Endothelial cell of umbilical vein (primary cell): ENCODE measurements at regions of chr3 and their contacts with region 1.

Region 1: GRCh38 chr3:57852896-57853295 is 96.8 kb downstream of the SLMAP start:
- DNase-seq: peak; percentile 54
- H3K4me3 ChIP-seq: no peak overlapping the region
- H3K27ac ChIP-seq: no peak overlapping the region
- H3K4me1 ChIP-seq: no peaks in the 10 kb centered on the region
- H3K27me3 ChIP-seq: no peaks in the 10 kb centered on the region
- CTCF ChIP-seq: peak in 1 of 2 donors; percentile 6
- POLR2A ChIP-seq: no peak

Region 2: GRCh38 chr3:57627976-57628375 is 224.9 kb before region 1 on chr3:
- CTCF ChIA-PET with region 1: interaction called, 10 read pairs
- POLR2A ChIA-PET with region 1: no interaction called
- dilution Hi-C with region 1: no loop called
- intact Hi-C with region 1: no loop called
- DNase-seq: no peak
- H3K4me3 ChIP-seq: no peak overlapping the region
- H3K27ac ChIP-seq: no peak overlapping the region
- H3K4me1 ChIP-seq: peaks cover 13% of the 10 kb centered on the region
- H3K27me3 ChIP-seq: no peaks in the 10 kb centered on the region
- CTCF ChIP-seq: no peak
- POLR2A ChIP-seq: no peak

Region 3: DNA sequence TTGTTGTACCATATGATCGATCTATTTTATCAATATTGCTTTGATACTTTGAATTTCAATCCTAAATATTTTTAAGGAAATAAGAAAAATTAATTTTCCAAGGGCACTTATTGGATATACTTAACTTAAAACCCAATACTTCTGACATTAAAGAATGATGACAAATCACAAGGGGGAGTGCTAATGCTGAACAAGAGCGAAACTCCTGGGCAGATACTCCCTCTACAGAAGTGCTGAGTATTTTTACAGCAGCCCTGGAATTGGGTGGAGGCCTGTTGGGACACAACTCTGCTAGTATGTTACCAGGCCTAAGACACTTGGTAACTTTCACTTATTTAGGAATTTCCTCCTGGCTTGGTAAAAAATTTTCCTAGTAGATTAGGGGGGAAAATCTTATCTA is 206.2 kb before region 1 on chr3:
- CTCF ChIA-PET with region 1: interaction called, 10 read pairs
- POLR2A ChIA-PET with region 1: no interaction called
- dilution Hi-C with region 1: no loop called
- intact Hi-C with region 1: loop called (anchors 5 kb)
- DNase-seq: peak; percentile 34
- H3K4me3 ChIP-seq: no peak overlapping the region
- H3K27ac ChIP-seq: no peak overlapping the region
- H3K4me1 ChIP-seq: no peaks in the 10 kb centered on the region
- H3K27me3 ChIP-seq: no peaks in the 10 kb centered on the region
- CTCF ChIP-seq: no peak
- POLR2A ChIP-seq: no peak